Naive thymus-derived CD4-positive, alpha-beta T cell (primary cell): ENCODE measurements at regions of chr13 and their contacts with region 1.

Region 1: GRCh38 chr13:33560726-33561125 is 257.2 kb upstream of the RFC3 start:
- DNase-seq: no peak
- ATAC-seq: no peak
- H3K4me3 ChIP-seq: no peak overlapping the region
- H3K4me3 Mint-ChIP-seq: no peak overlapping the region
- H3K27ac ChIP-seq: no peak overlapping the region
- H3K27ac Mint-ChIP-seq: no peak overlapping the region
- H3K4me1 ChIP-seq: no peaks in the 10 kb centered on the region
- H3K4me1 Mint-ChIP-seq: no peaks in the 10 kb centered on the region
- H3K27me3 ChIP-seq: no peaks in the 10 kb centered on the region
- H3K27me3 Mint-ChIP-seq: peaks cover 0 to 17% (median 8%) of the 10 kb centered on the region in 5 donors

Region 2: DNA sequence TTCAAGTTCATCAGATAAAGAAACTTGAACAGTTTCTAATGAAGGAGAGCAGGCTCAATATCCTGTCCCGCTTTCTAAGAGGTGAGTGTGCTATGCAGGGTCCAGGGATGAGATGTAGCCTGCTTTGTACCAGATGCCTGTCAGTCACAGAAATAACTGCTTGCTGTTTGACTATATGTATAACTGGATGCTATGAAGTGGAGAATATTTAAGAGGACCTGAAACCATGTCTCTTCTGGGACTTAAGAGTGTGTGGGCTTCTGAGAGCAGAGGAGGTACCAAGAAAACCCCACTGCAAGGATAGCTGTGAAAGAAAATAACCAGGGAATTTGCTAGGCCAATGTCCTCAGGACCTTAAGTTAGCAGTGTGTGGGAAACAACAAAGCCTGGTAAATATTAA is 10.9 kb after region 1 on chr13:
- CTCF ChIA-PET with region 1: no interaction called
- POLR2A ChIA-PET with region 1: no interaction called
- intact Hi-C with region 1: loop called in 1 of 2 experiments (anchors 1 kb)
- DNase-seq: no peak
- ATAC-seq: no peak
- H3K4me3 ChIP-seq: no peak overlapping the region
- H3K4me3 Mint-ChIP-seq: no peak overlapping the region
- H3K27ac ChIP-seq: no peak overlapping the region
- H3K27ac Mint-ChIP-seq: no peak overlapping the region
- H3K4me1 ChIP-seq: no peaks in the 10 kb centered on the region
- H3K4me1 Mint-ChIP-seq: peaks cover 0 to 4% (median 0%) of the 10 kb centered on the region in 7 donors
- H3K27me3 ChIP-seq: no peaks in the 10 kb centered on the region
- H3K27me3 Mint-ChIP-seq: no peaks in the 10 kb centered on the region